GM12878 (cell line): ENCODE measurements at regions of chr1 and their contacts with region 1.

Region 1: GRCh38 chr1:165877940-165878556 is 50.6 kb downstream of the UCK2 start:
- DNase-seq: peak; percentile 67
- ATAC-seq: peak; percentile 78
- H3K4me3 ChIP-seq: no peak overlapping the region
- H3K27ac ChIP-seq: peak overlapping the region; percentile 69
- H3K4me1 ChIP-seq: peaks cover 53% of the 10 kb centered on the region
- H3K27me3 ChIP-seq: no peaks in the 10 kb centered on the region
- CTCF ChIP-seq: no peak
- EP300 ChIP-seq: peak; percentile 82 to 84; a peak in 3 of 4 replicates
- POLR2A ChIP-seq: no peak
- RAD21 ChIP-seq: 0 out of 2 replicates have a peak, but pooled peaks have one; percentile 11

Region 2: GRCh38 chr1:165807613-165808012 is 70.4 kb before region 1 on chr1:
- CTCF ChIA-PET with region 1: no interaction called
- POLR2A ChIA-PET with region 1: no interaction called
- RAD21 ChIA-PET with region 1: no interaction called
- SMC1A ChIA-PET with region 1: no interaction called
- in situ Hi-C with region 1: no loop called
- intact Hi-C with region 1: no loop called
- DNase-seq: no peak
- ATAC-seq: no peak
- H3K4me3 ChIP-seq: no peak overlapping the region
- H3K27ac ChIP-seq: no peak overlapping the region
- H3K4me1 ChIP-seq: no peaks in the 10 kb centered on the region
- H3K27me3 ChIP-seq: no peaks in the 10 kb centered on the region
- CTCF ChIP-seq: no peak
- EP300 ChIP-seq: no peak
- POLR2A ChIP-seq: no peak
- RAD21 ChIP-seq: no peak

Region 3: DNA sequence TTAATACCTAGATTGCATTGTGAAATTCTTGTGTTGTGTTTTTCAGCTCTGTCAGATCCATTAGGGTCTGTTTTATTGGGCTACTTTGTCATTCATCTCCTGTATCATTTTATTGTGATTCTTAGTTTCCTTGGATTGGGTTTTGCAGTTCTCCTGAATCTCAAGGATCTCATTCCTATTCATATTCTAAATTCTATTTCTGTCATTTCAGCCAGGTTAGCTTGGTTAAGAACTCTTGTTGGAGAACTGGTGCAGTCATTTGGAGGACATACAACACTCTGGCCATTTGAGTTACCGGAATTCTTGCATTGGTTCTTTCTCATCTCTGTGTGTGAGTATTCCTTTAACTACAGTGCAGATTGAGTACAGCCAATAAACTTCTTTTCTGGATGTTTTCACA is 129.1 kb after region 1 on chr1:
- CTCF ChIA-PET with region 1: no interaction called
- POLR2A ChIA-PET with region 1: no interaction called
- RAD21 ChIA-PET with region 1: no interaction called
- SMC1A ChIA-PET with region 1: no interaction called
- in situ Hi-C with region 1: no loop called
- intact Hi-C with region 1: no loop called
- DNase-seq: no peak
- ATAC-seq: no peak
- H3K4me3 ChIP-seq: no peak overlapping the region
- H3K27ac ChIP-seq: no peak overlapping the region
- H3K4me1 ChIP-seq: no peaks in the 10 kb centered on the region
- H3K27me3 ChIP-seq: no peaks in the 10 kb centered on the region
- CTCF ChIP-seq: no peak
- EP300 ChIP-seq: no peak
- POLR2A ChIP-seq: no peak
- RAD21 ChIP-seq: no peak

Region 4: DNA sequence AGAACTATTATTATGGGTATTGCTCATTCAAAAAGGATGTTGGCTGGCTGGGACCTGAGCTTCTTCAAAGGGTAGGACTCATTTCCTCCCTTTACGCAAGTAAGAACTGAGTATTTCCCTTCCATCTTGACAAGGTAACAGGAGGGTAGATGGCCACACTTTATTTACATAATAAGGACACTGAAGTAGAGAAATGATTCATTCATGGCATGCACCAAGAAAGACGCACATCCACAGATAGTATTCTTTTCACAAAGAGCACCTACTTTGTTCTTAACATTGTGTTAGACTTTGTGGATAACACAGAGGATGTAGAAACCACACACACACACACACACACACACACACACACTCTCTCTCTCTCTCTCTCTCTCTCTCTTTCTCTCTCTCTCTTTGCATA is 205.8 kb after region 1 on chr1:
- CTCF ChIA-PET with region 1: interaction called, 5 read pairs
- POLR2A ChIA-PET with region 1: no interaction called
- RAD21 ChIA-PET with region 1: no interaction called
- SMC1A ChIA-PET with region 1: no interaction called
- in situ Hi-C with region 1: no loop called
- intact Hi-C with region 1: loop called (anchors 5 kb)
- DNase-seq: peak; percentile 60
- ATAC-seq: peak; percentile 78
- H3K4me3 ChIP-seq: no peak overlapping the region
- H3K27ac ChIP-seq: no peak overlapping the region
- H3K4me1 ChIP-seq: peaks cover 9% of the 10 kb centered on the region; the same call in 1 of the 2 replicates
- H3K27me3 ChIP-seq: no peaks in the 10 kb centered on the region
- CTCF ChIP-seq: no peak
- EP300 ChIP-seq: peak in 1 of 2 experiments; percentile 11; a peak in 1 of 4 replicates
- POLR2A ChIP-seq: no peak
- RAD21 ChIP-seq: no peak